HepG2 (cell line): ENCODE measurements at regions of chr1 and their contacts with region 1.

Region 1: DNA sequence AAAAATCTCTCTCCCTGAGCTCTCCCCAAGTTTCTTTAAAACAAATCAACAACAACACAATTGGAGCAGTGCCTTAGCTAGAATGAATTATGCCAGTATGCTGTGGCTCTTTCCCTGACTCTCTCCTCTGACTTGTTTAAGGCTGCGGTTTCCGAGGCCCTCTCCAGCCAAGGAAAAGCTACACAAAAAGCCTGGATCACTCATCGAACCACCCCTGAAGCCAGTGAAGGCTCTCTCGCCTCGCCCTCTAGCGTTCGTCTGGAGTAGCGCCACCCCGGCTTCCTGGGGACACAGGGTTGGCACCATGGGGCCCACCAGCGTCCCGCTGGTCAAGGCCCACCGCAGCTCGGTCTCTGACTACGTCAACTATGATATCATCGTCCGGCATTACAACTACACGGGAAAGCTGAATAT is 1.9 kb downstream of the S1PR1 start:
- DNase-seq: peak; percentile 54
- ATAC-seq: peak; percentile 88
- H3K4me3 ChIP-seq: no peak overlapping the region
- H3K27ac ChIP-seq: no peak overlapping the region
- H3K4me1 ChIP-seq: peaks cover 28% of the 10 kb centered on the region
- H3K27me3 ChIP-seq: peaks cover 9 to 38% of the 10 kb centered on the region in 2 experiments
- CTCF ChIP-seq: peak; percentile 91
- EP300 ChIP-seq: no peak
- POLR2A ChIP-seq: no peak
- RAD21 ChIP-seq: peak; percentile 76

Region 2: GRCh38 chr1:100921109-100921706 is 317.5 kb before region 1 on chr1:
- CTCF ChIA-PET with region 1: interaction called, 12 read pairs
- POLR2A ChIA-PET with region 1: no interaction called
- in situ Hi-C with region 1: loop called (anchors 5 kb)
- intact Hi-C with region 1: loop called (anchors 1 kb)
- DNase-seq: peak; percentile 35
- ATAC-seq: no peak
- H3K4me3 ChIP-seq: no peak overlapping the region
- H3K27ac ChIP-seq: no peak overlapping the region
- H3K4me1 ChIP-seq: peaks cover 8% of the 10 kb centered on the region
- H3K27me3 ChIP-seq: no peaks in the 10 kb centered on the region
- CTCF ChIP-seq: peak; percentile 58
- EP300 ChIP-seq: no peak
- POLR2A ChIP-seq: no peak
- RAD21 ChIP-seq: peak; percentile 16; the same call in 1 of the 2 replicates

Region 3: GRCh38 chr1:100928128-100928527 is 310.6 kb before region 1 on chr1:
- CTCF ChIA-PET with region 1: no interaction called
- POLR2A ChIA-PET with region 1: no interaction called
- in situ Hi-C with region 1: loop called (anchors 5 kb)
- intact Hi-C with region 1: no loop called
- DNase-seq: no peak
- ATAC-seq: peak; percentile 55; the same call in 2 of the 3 replicates
- H3K4me3 ChIP-seq: no peak overlapping the region
- H3K27ac ChIP-seq: no peak overlapping the region
- H3K4me1 ChIP-seq: no peaks in the 10 kb centered on the region
- H3K27me3 ChIP-seq: no peaks in the 10 kb centered on the region
- CTCF ChIP-seq: no peak
- EP300 ChIP-seq: no peak
- POLR2A ChIP-seq: no peak
- RAD21 ChIP-seq: no peak

Region 4: GRCh38 chr1:101025657-101026504 is 212.8 kb before region 1 on chr1 and contains the start of gene DPH5:
- CTCF ChIA-PET with region 1: no interaction called
- POLR2A ChIA-PET with region 1: no interaction called
- in situ Hi-C with region 1: no loop called
- intact Hi-C with region 1: loop called (anchors 1 kb)
- DNase-seq: peak; percentile 82
- ATAC-seq: peak; percentile 97
- H3K4me3 ChIP-seq: peak within 1 kb of the TSS; percentile 78 to 90 (median 83)
- H3K27ac ChIP-seq: peak within 1 kb of the TSS; percentile 81
- H3K4me1 ChIP-seq: peaks cover 38% of the 10 kb centered on the region
- H3K27me3 ChIP-seq: peaks cover 0 to 5% of the 10 kb centered on the region in 2 experiments; a peak in 1 of 5 replicates
- CTCF ChIP-seq: no peak
- EP300 ChIP-seq: peak in 1 of 2 experiments; percentile 49; a peak in 2 of 4 replicates
- POLR2A ChIP-seq: peak; percentile 92 to 95
- RAD21 ChIP-seq: peak; percentile 36
- total RNA-seq, gene DPH5: 53.2 and 71.9 TPM in 2 replicates

Region 5: DNA sequence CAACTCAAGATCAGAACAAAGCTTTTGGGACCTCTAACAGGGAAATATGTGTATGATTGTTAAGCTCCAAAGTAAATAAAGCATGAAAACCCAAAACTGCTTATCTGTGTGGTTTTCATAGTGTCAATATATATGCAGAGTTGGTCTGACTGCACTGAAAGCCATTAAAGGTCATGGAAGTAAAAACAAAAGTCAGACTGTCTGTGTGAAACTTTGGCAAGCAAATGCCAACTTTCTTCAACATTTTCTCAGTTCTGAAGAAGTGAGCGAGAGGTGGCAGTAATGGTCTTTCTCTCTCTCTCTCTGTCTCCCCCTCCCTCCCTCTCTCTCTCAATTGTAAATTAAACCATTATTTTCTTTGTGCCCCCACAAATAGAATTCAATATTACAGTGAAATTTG is 101.9 kb before region 1 on chr1:
- CTCF ChIA-PET with region 1: no interaction called
- POLR2A ChIA-PET with region 1: no interaction called
- in situ Hi-C with region 1: no loop called
- intact Hi-C with region 1: loop called (anchors 10 kb)
- DNase-seq: peak; percentile 73
- ATAC-seq: peak; percentile 85
- H3K4me3 ChIP-seq: peak overlapping the region in 1 of 3 experiments; percentile 30; a peak in 2 of 6 replicates
- H3K27ac ChIP-seq: peak overlapping the region; percentile 71
- H3K4me1 ChIP-seq: peaks cover 59% of the 10 kb centered on the region
- H3K27me3 ChIP-seq: 0 out of 5 replicates have a peak, but pooled peaks cover 0 to 1% of the 10 kb centered on the region in 2 experiments
- CTCF ChIP-seq: peak; percentile 64
- EP300 ChIP-seq: peak in 1 of 2 experiments; percentile 83; a peak in 2 of 4 replicates
- POLR2A ChIP-seq: no peak
- RAD21 ChIP-seq: no peak

Region 6: DNA sequence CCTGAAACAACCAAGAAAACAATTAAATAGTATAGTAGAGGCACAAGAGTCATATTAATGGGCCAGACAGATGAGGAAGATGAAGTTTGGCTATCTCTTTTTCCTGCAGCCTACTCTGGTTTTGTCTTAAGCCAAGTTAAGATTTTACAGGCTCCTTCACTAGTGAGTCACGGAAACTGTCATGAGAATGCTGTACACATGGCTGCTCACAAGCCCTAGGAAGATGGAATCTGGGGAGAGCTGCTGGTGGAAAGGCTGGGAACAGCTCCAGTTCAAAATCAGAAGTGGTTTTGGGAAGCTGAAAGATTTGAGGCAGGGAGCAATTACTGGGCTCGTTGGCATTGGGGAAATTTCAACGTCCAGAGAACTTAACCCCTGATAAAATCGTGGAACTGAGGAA is 48.2 kb before region 1 on chr1:
- CTCF ChIA-PET with region 1: no interaction called
- POLR2A ChIA-PET with region 1: no interaction called
- in situ Hi-C with region 1: no loop called
- intact Hi-C with region 1: no loop called
- DNase-seq: no peak
- ATAC-seq: no peak
- H3K4me3 ChIP-seq: no peak overlapping the region
- H3K27ac ChIP-seq: no peak overlapping the region
- H3K4me1 ChIP-seq: peaks cover 15% of the 10 kb centered on the region
- H3K27me3 ChIP-seq: no peaks in the 10 kb centered on the region
- CTCF ChIP-seq: no peak
- EP300 ChIP-seq: no peak
- POLR2A ChIP-seq: no peak
- RAD21 ChIP-seq: no peak

Region 7: DNA sequence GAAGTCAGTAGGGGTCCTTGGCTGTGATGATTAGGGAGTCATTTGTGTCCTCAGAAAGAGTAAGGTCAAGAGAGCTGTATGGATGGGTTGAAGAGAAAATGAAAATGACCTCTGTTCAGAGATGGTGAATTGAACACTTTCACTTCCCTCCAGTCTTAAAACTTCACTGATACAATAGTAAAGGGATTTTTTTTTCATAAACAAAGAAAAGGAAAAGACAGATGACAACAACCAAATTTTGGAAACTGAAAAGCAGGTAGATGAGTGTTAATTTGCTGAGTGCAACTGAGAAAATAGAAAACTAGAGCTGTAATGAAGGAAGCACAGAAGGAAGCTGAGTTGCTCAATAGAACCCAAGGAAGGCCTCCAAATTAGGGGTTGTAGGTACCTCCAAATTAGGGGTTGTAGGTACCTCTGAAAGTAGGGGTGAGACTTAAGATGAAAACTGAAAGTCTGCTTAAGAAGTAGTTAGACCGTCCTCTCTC is 16.7 kb before region 1 on chr1:
- CTCF ChIA-PET with region 1: no interaction called
- POLR2A ChIA-PET with region 1: no interaction called
- in situ Hi-C with region 1: no loop called
- intact Hi-C with region 1: no loop called
- DNase-seq: no peak
- ATAC-seq: no peak
- H3K4me3 ChIP-seq: no peak overlapping the region
- H3K27ac ChIP-seq: no peak overlapping the region
- H3K4me1 ChIP-seq: no peaks in the 10 kb centered on the region
- H3K27me3 ChIP-seq: no peaks in the 10 kb centered on the region
- CTCF ChIP-seq: no peak
- EP300 ChIP-seq: no peak
- POLR2A ChIP-seq: no peak
- RAD21 ChIP-seq: no peak